PC-9 (cell line): ENCODE measurements at regions of chr3 and their contacts with region 1.

Region 1: DNA sequence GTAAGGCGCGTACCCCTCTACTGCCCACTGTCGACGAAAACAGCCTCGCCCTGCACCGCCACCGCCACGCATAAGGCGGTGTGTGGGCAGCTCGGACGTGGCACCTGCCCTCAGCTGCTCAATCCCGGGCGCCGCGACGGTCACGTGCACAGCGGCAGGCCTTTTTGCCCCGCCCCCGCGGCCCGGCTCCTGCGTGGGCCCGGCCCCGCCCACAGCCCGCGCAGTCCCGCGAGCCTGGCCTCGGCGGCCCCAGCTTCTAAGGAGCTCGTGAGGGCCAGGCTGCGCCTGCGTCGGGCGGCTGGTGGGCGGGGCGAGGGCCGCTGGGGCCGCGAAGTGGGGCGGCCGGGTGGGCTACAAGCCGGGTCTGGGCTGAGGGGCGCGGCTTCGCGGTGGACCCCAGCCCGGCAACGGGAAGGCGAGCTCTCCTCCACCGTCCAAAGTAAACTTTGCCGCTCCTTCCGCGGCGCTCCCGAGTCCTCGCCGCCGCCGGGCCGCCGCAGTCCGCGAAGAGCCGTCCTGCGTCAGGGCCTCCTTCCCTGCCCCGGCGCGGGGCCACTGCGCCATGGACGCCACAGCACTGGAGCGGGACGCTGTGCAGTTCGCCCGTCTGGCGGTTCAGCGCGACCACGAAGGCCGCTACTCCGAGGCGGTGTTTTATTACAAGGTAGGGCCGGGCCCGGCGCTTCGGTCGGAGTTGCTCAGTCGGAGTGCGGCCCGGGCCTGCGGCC is at the start of gene CAPN7:
- DNase-seq: peak; percentile 72 to 95
- H3K4me3 ChIP-seq: peak within 1 kb of the TSS; percentile 98
- H3K27ac ChIP-seq: peak within 1 kb of the TSS; percentile 50
- H3K4me1 ChIP-seq: peaks cover 19% of the 10 kb centered on the region
- H3K27me3 ChIP-seq: no peaks in the 10 kb centered on the region
- CTCF ChIP-seq: no peak
- total RNA-seq, gene CAPN7: 28.5 and 29.5 TPM in 2 replicates

Region 2: GRCh38 chr3:15108082-15108545 is 98.0 kb before region 1 on chr3:
- CTCF ChIA-PET with region 1: no interaction called
- POLR2A ChIA-PET with region 1: no interaction called
- intact Hi-C with region 1: loop called (anchors 5 kb)
- DNase-seq: peak in 1 of 2 experiments; percentile 62
- H3K4me3 ChIP-seq: no peak overlapping the region
- H3K27ac ChIP-seq: no peak overlapping the region
- H3K4me1 ChIP-seq: no peaks in the 10 kb centered on the region
- H3K27me3 ChIP-seq: peaks cover 11% of the 10 kb centered on the region; the same call in 1 of the 2 replicates
- CTCF ChIP-seq: peak; percentile 94

Region 3: GRCh38 chr3:15120986-15121385 is 85.1 kb before region 1 on chr3:
- CTCF ChIA-PET with region 1: no interaction called
- POLR2A ChIA-PET with region 1: no interaction called
- intact Hi-C with region 1: no loop called
- DNase-seq: peak in 1 of 2 experiments; percentile 42
- H3K4me3 ChIP-seq: no peak overlapping the region
- H3K27ac ChIP-seq: no peak overlapping the region
- H3K4me1 ChIP-seq: no peaks in the 10 kb centered on the region
- H3K27me3 ChIP-seq: no peaks in the 10 kb centered on the region
- CTCF ChIP-seq: no peak

Region 4: DNA sequence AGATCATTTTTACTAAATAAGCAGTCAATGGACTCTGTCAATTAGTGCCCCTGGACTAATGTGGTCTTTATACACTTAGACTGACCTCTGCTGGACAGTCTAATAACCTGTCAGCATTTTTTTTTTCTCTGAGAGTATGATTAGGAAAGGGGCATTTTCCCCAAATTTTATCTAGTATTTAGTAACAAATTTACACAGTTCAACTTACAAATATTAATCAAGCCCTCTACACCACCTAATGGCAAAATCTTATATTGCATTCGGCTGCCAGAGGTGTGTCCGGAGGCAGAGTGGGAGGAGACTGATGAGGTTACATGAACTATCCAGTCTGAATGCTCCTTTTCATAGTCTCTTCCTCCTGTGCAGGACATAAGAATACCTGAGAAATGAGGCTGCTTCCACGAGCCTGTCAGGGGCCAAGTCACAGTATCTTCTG is 351.4 kb after region 1 on chr3:
- CTCF ChIA-PET with region 1: interaction called, 4 read pairs
- POLR2A ChIA-PET with region 1: no interaction called
- intact Hi-C with region 1: loop called (anchors 1 kb)
- DNase-seq: peak; percentile 70 to 77
- H3K4me3 ChIP-seq: no peak overlapping the region
- H3K27ac ChIP-seq: no peak overlapping the region
- H3K4me1 ChIP-seq: 0 out of 2 replicates have a peak, but pooled peaks cover 3% of the 10 kb centered on the region
- H3K27me3 ChIP-seq: no peaks in the 10 kb centered on the region
- CTCF ChIP-seq: peak; percentile 85

Region 5: DNA sequence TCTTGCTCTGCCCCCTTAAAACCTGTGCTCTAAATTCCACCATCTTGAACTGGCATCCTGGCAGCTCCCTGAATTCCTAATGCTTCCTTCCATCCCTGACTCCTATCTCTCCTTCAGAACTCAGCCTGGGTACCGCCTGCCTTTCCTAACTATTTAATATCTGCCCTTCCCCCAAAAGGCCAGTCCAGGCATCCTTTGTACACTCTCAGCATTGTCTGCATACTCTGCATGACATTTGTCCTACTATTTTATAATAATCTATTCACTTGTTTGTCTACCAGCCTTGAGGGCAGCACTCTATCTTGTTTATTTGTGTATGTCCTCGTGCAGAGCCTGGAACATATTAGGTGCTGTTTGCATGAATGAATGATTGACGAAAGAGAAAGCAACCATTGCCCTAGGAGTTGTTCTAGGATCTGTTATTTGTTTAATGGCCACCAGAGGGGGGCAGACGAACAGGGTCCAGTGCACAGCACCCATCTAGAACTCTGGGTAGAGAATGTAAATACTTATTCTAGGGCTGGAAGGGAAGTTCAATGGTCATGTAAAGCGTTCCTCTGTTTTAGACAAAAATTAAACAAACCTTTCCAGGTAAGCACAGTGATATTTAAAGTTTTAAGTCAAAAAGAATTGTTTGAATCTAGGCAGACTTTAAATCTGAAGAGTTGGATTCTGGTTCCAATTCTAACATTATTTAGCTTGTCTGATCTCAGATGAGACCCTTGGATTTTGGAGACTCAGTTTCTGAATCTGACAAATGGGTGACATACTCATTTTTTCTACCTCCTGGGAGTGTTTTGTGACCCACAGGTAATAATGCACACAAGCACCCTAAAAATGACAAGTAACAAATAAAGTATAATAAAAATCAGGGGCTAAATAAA is 842.6 kb after region 1 on chr3:
- CTCF ChIA-PET with region 1: no interaction called
- POLR2A ChIA-PET with region 1: no interaction called
- intact Hi-C with region 1: loop called (anchors 10 kb)
- DNase-seq: peak; percentile 25 to 36
- H3K4me3 ChIP-seq: peak overlapping the region; percentile 30; the same call in 1 of the 2 replicates
- H3K27ac ChIP-seq: no peak overlapping the region
- H3K4me1 ChIP-seq: no peaks in the 10 kb centered on the region
- H3K27me3 ChIP-seq: no peaks in the 10 kb centered on the region
- CTCF ChIP-seq: peak; percentile 93